ENCODE measurements at regions of chr4 and their contacts with region 1.

Region 1: GRCh38 chr4:73019462-73020047 is 50.0 kb downstream of the COX18 start:
- DNase-seq: peak; percentile 11
- H3K4me3 ChIP-seq: no peak overlapping the region
- H3K27ac ChIP-seq: no peak overlapping the region
- H3K4me1 ChIP-seq: no peaks in the 10 kb centered on the region
- H3K27me3 ChIP-seq: no peaks in the 10 kb centered on the region
- CTCF ChIP-seq: peak; percentile 65 to 84 (median 69)
- POLR2A ChIP-seq: no peak

Region 2: GRCh38 chr4:72295966-72296557 is 723.5 kb before region 1 on chr4:
- intact Hi-C with region 1: loop called (anchors 10 kb)
- DNase-seq: no peak
- H3K4me3 ChIP-seq: no peak overlapping the region
- H3K27ac ChIP-seq: no peak overlapping the region
- H3K4me1 ChIP-seq: no peaks in the 10 kb centered on the region
- H3K27me3 ChIP-seq: no peaks in the 10 kb centered on the region
- CTCF ChIP-seq: peak in 3 of 4 experiments; percentile 25 to 70 (median 56)
- POLR2A ChIP-seq: no peak

Region 3: GRCh38 chr4:72505314-72505744 is 514.2 kb before region 1 on chr4:
- intact Hi-C with region 1: loop called (anchors 5 kb)
- DNase-seq: no peak
- H3K4me3 ChIP-seq: no peak overlapping the region
- H3K27ac ChIP-seq: no peak overlapping the region
- H3K4me1 ChIP-seq: no peaks in the 10 kb centered on the region
- H3K27me3 ChIP-seq: no peaks in the 10 kb centered on the region
- CTCF ChIP-seq: peak in 3 of 4 experiments; percentile 19 to 56 (median 43)
- POLR2A ChIP-seq: no peak

Region 4: DNA sequence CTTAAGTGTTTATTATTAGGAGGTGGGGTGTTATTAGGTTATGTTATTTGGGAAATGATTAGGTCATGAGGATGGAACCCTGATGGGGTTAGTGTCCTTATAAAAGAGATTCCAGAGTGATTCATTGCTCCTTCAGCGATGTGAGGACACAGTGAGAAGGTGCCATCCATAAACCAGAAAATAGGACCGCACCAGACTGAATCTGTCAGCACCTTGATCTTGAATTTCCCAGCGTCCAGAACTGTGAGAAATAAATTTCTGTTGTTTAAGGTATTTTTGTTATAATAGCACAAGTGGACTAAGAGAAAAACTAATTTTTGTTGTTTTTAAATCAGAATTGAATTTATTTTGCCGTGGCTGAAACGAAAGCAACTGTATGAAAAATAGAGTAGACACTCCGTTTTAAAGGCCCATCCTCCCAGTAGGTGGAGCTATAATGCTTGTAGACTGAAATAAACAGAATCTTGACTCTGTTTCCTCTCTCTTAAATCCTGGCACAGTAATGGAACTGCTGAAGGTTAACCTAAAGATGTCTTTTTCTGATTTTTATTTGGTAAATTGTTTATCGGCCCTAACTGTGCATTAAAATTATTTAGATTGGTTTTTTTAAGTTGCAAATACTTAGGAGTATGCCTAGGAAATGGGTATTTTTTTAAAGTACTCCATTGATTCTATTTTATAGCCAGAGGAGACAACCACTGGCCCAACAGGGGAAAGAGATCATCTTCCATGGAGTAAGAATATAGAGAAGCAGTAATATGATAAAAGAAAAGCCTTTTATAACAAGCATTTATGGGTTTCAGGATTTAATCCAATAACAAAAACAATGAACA is 317.4 kb before region 1 on chr4:
- intact Hi-C with region 1: loop called (anchors 2 kb)
- DNase-seq: peak; percentile 43
- H3K4me3 ChIP-seq: peak overlapping the region; percentile 11 to 21
- H3K27ac ChIP-seq: no peak overlapping the region
- H3K4me1 ChIP-seq: no peaks in the 10 kb centered on the region
- H3K27me3 ChIP-seq: no peaks in the 10 kb centered on the region
- CTCF ChIP-seq: peak; percentile 35 to 68 (median 64)
- POLR2A ChIP-seq: no peak

Measured in prostate gland (tissue), 2 donors.